Posterior vena cava (tissue), 2 donors: ENCODE measurements at regions of chr3 and their contacts with region 1.

Region 1: DNA sequence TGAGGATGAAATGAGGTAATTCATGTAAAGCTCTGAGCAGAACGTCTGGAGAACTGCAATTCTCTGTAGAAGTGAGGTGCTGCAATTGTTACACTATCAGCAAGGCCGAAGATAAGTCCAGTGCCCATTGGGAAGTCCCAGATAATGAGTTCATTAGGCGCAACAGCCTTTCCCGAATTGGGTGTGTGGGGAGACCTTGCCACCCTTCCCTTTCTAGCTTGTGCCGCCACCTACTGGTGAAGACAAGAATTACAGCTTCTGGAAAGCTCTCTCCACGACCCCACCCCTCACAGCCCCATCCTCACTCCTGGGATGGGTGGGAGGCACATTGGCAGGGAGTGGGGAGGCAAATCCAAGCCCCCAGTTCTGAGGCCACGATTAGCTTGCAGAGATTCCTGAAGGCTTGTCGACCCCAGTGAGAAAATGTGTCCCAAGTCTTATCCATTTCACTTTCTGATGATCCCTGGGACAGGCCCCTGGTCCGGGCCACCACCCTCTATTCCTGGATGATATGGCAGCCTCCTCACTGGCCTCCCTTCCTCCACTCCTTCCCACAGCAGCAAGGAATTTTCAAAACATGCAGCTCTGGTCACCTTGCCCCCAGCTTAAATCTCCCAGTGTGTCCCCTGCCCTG is 36.4 kb downstream of the FAM3D start:
- DNase-seq: no peak

Region 2: DNA sequence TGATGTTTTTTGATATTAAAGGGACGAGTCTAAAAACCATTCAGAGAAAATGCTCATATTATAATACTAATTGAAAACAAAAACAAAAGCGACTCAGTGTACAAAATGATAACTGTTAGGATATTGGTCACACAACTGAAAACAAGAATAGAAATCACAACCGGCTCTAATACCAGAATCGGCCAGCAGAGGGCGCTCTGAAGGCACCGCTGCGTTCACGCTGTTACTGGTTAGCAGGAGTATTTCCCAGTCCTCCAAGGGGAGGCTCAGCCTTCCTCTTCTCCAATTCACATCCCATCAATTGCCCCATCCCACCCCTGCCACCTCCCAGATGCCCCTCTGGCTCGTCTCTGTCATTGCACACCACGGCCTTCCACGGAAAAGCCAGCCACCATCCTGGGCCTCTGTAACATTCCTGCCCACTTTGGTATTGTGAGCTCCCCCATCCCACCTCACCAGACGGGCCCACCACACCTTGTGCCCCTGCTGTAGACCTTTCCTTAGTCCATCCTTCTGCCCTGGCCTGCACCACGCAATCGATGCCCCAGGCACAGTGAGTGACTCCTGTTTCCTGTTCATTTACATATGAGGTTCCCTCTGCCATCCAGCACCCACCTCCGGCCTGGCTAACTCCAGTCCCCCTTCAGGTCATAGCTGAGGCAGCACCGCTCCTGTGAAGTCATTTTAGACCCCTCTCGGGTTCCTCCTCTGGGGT is 61.5 kb before region 1 on chr3:
- intact Hi-C with region 1: loop called (anchors 5 to 10 kb)
- DNase-seq: peak; percentile 93

Region 3: DNA sequence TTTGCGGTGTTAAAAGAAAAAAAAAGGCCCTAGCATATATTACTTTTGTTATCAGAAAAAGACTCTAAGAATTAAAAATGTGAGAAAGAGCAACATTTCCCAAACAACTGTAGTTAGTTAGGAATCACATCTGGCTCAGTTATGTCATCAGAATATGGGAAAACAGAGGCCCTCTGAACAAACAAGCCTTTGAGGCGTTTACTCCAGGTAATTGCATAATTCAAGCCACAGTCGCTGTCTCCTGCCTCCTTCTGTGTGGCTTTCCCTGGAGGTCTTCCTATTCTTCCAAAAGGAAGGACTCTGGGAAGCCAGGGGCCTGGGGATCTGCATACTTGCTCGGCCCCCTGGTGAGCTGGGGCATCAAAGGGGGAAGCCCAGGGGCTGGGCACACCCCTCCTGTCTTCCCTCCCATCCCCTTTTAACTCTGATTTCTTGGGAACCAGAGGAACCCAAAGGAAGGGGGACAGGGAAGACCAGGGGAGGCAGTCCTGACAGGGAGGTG is 49.3 kb before region 1 on chr3:
- intact Hi-C with region 1: loop called in 1 of 2 experiments (anchors 1 kb)
- DNase-seq: peak; percentile 31

Region 4: GRCh38 chr3:58666683-58667082 is 36.5 kb after region 1 on chr3 and contains the start of gene FAM3D:
- intact Hi-C with region 1: no loop called
- DNase-seq: no peak
- total RNA-seq, gene FAM3D: not detected